ENCODE measurements at regions of chr5 and their contacts with region 1.

Region 1: GRCh38 chr5:179643556-179643955 is 20.1 kb upstream of the HNRNPH1 start:
- DNase-seq: no peak
- H3K4me3 ChIP-seq: no peak overlapping the region
- H3K27ac ChIP-seq: no peak overlapping the region
- H3K4me1 ChIP-seq: no peaks in the 10 kb centered on the region
- CTCF ChIP-seq: no peak

Region 2: DNA sequence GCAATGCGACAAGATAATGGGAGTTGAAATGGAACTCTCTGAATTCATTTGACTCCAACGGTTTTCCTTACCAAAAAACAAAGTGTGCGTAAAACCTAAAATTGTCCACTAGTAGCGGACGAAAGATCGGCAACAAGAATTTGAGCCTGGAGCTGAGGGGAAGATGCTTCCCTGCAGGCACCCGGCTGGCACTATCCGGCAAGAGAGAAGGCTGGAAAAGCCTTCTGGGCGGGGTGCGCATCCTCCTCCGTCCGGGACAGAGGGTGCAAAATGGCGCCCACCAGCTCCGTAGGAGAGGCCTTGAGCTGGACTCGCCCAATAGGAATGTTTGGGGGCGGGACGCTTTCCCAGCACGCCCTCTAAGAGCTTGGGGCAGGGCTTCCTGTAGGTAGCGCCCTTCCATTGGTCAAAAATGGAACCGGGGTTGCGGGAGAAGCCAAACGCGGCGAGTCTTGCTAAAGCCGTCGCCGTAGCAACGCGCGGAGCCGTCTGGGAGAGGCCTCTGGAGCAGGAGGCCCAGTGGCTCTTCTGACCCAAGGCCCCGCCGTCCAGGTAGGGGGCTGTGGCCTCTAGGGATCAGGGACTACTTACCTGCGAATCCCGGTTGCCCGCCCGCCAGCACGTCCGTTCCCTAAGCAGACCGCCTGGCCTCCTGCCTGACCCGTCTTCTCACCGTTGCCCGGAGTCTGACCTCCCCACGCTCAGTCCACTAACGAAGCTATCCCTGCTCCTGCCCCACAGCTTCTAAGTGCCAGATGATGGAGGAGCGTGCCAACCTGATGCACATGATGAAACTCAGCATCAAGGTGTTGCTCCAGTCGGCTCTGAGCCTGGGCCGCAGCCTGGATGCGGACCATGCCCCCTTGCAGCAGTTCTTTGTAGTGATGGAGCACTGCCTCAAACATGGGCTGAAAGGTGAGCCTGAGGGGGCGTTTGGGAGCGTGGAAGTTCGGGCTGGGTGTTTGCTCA is 84.0 kb before region 1 on chr5:
- CTCF ChIA-PET with region 1: no interaction called
- POLR2A ChIA-PET with region 1: no interaction called
- intact Hi-C with region 1: no loop called
- DNase-seq: peak; percentile 96
- H3K4me3 ChIP-seq: peak overlapping the region; percentile 75
- H3K27ac ChIP-seq: peak overlapping the region; percentile 58
- H3K4me1 ChIP-seq: peaks cover 16% of the 10 kb centered on the region
- CTCF ChIP-seq: no peak

Region 3: DNA sequence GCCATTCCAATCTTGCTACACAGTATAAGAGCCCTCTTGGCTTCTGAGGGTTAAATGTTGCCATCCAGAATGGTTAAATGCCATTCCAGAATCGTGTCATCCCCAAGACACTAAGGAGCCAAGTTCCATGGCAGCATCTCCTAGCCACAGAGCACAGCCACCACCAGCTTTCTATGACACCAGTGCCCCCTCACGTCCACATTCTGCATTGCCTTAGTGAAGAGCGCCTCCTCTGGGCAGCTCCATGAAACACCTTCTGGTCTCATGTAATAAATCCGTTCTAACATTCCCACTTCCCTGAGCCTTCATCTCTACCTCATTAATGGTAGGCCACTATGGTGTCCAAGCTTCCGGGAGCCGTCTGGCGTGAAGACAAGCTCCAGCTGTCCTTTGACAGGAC is 24.8 kb after region 1 on chr5:
- CTCF ChIA-PET with region 1: no interaction called
- POLR2A ChIA-PET with region 1: no interaction called
- intact Hi-C with region 1: loop called (anchors 2 kb)
- DNase-seq: peak; percentile 59
- H3K4me3 ChIP-seq: no peak overlapping the region
- H3K27ac ChIP-seq: no peak overlapping the region
- H3K4me1 ChIP-seq: no peaks in the 10 kb centered on the region
- CTCF ChIP-seq: peak; percentile 96